ENCODE measurements at regions of chr12 and their contacts with region 1.

Region 1: DNA sequence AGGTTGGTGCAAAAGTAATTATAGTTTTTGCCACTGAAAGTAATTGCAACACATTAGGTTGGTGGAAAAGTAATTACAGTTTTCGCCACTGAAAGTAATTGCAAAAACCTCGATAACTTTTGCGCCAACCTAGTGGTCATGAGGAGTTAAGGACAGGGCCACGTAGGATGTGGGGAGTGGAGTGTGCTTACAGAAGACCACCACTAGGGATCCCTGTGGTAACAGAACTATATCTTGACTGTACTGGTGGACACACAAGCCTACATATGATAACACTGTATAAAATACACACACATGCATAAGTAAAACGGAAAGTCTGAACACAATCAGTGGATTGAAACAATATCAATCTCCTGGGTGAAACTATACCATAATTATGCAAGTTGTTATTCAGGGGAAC is 187.4 kb upstream of the ABCD2 start:
- DNase-seq: peak; percentile 45
- ATAC-seq: peak; percentile 99
- H3K4me3 ChIP-seq: no peak overlapping the region
- H3K27ac ChIP-seq: no peak overlapping the region
- H3K4me1 ChIP-seq: no peaks in the 10 kb centered on the region
- H3K27me3 ChIP-seq: no peaks in the 10 kb centered on the region
- CTCF ChIP-seq: peak; percentile 54
- EP300 ChIP-seq: no peak
- POLR2A ChIP-seq: no peak
- RAD21 ChIP-seq: no peak

Region 2: DNA sequence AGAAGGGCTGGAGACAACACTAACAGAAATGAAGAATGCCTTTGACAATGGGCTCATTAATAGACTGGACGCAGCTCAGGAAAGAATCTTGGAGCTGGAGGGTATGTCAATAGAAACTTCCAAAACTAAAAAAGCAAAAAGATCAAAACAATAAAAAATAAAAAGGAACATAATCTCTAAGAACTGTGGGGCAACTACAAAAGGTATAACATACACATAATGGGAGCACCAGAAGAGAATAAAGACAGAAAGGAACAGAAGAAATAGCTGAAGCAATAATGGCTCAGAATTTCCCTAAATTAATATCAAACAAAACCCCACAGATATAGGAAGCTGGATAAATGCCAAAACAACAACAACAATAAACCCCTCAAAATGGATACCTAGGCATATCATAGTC is 63.4 kb before region 1 on chr12:
- CTCF ChIA-PET with region 1: no interaction called
- POLR2A ChIA-PET with region 1: no interaction called
- in situ Hi-C with region 1: no loop called
- intact Hi-C with region 1: loop called (anchors 10 kb)
- DNase-seq: no peak
- ATAC-seq: no peak
- H3K4me3 ChIP-seq: no peak overlapping the region
- H3K27ac ChIP-seq: no peak overlapping the region
- H3K4me1 ChIP-seq: no peaks in the 10 kb centered on the region
- H3K27me3 ChIP-seq: no peaks in the 10 kb centered on the region
- CTCF ChIP-seq: no peak
- EP300 ChIP-seq: no peak
- POLR2A ChIP-seq: no peak
- RAD21 ChIP-seq: no peak

Region 3: DNA sequence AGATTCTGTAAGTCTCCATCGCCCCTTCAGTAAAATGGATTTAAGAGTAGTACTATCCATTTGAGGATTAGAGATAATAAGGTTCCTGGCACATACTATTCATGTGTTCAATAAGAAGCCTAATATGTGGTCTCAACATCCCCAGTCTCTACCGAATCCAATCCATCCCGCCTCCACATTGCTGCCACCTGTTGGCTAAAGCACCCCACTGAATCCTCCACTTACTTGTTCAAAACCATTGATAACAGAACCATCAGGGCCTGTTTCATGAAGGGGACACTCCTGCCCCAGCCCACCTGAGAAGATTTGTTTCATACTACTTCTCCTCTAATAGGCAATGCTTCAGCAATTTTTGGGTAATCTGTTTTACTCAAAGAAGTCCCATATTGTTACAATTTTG is 151.3 kb after region 1 on chr12:
- CTCF ChIA-PET with region 1: no interaction called
- POLR2A ChIA-PET with region 1: no interaction called
- in situ Hi-C with region 1: no loop called
- intact Hi-C with region 1: loop called (anchors 2 kb)
- DNase-seq: peak; percentile 9
- ATAC-seq: peak; percentile 61; the same call in 2 of the 3 replicates
- H3K4me3 ChIP-seq: no peak overlapping the region
- H3K27ac ChIP-seq: no peak overlapping the region
- H3K4me1 ChIP-seq: no peaks in the 10 kb centered on the region
- H3K27me3 ChIP-seq: no peaks in the 10 kb centered on the region
- CTCF ChIP-seq: peak; percentile 48
- EP300 ChIP-seq: no peak
- POLR2A ChIP-seq: no peak
- RAD21 ChIP-seq: no peak

Region 4: DNA sequence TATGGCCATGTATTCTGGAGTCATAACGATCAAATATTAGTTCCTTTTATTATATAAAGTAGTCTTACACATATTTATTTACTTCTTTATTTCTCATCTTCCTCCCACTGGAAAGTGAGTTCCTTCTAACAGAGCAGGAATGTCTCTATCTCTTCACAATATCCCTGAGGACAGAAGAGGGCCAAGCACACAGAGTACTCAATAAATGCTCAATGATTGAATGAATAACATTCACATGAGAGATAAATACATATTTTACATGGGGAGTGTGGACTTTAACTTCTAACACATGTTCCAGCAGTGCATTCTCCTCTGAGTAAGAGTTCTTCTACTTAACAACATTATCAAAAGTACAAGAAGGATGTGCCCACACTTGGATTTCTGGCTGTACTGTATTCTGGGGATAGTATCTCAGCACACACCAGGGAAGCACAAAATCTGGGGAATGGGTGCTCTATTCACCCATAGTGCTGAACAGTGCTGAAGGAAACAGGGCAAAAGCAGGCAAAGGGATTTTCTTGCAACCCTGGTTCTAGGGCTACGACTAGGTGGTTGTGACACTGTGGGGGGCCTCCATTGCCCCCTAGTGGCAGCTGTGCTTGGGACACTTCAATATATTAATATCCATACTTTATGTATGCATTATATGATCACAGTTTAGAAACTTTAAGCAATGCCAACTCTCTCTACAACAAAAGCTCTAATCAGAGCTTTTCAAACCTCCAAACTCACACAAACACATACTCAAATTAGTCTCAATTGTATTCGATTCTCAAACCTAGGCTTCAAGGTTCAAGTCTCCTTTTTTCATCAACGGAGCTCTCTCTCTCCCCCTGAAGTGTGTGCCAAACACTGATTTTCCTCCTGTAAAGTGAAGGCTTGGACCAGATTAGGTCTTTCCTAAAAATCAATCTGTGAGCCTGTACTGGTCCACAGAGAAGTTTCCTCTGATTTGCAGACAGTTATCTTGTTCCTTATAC is 183.4 kb after region 1 on chr12:
- CTCF ChIA-PET with region 1: interaction called, 3 read pairs
- POLR2A ChIA-PET with region 1: no interaction called
- in situ Hi-C with region 1: no loop called
- intact Hi-C with region 1: loop called (anchors 2 kb)
- DNase-seq: peak; percentile 28
- ATAC-seq: peak; percentile 93
- H3K4me3 ChIP-seq: no peak overlapping the region
- H3K27ac ChIP-seq: no peak overlapping the region
- H3K4me1 ChIP-seq: no peaks in the 10 kb centered on the region
- H3K27me3 ChIP-seq: no peaks in the 10 kb centered on the region
- CTCF ChIP-seq: peak; percentile 72
- EP300 ChIP-seq: no peak
- POLR2A ChIP-seq: no peak
- RAD21 ChIP-seq: peak; percentile 45; the same call in 1 of the 2 replicates